HCT116 (cell line): ENCODE measurements at regions of chr16 and their contacts with region 1.

Region 1: DNA sequence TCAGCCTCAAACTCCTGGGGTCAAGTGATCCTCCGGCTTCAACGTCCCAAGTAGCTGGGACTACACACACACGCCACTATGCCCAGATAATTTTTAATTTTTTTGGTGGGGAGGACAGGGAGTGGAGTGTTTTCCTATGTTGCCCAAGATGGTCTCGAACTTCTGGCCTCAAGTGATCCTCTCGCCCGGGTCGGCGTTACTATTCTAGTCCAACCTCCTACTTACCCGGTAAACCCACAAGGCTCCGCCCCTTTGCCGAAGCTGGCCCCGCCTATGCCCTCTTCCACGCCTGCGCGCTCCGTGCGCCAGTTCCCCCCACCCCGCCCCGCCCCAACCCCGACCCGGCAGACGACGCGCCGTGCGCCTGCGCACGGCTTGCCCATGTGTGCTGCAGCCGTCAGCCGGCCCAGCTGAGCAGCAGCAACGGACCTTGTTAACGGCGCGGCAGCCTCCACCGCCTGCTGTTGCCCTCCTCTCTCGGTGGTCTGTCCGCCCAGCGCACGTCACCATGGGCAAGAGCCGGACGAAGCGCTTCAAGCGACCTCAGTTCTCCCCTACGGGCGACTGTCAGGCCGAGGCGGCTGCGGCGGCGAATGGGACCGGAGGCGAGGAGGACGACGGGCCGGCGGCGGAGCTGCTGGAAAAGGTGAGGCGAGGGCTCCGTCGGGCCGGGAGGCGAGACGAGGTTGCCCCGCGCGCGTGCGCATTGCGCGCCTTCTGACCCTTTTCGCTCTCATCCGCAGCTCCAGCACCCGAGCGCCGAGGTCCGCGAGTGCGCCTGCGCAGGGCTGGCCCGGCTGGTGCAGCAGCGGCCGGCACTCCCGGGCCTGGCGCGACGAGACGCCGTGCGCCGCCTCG is at the start of gene HEATR3:
- DNase-seq: peak; percentile 87
- ATAC-seq: peak; percentile 92
- H3K4me3 ChIP-seq: peak within 1 kb of the TSS; percentile 79 to 81
- H3K27ac ChIP-seq: peak within 1 kb of the TSS; percentile 84
- H3K4me1 ChIP-seq: peaks cover 0 to 14% of the 10 kb centered on the region in 2 experiments; a peak in 2 of 4 replicates
- H3K27me3 ChIP-seq: no peaks in the 10 kb centered on the region
- CTCF ChIP-seq: no peak
- POLR2A ChIP-seq: peak; percentile 70
- RAD21 ChIP-seq: no peak
- total RNA-seq, gene HEATR3: 16.3 TPM

Region 2: DNA sequence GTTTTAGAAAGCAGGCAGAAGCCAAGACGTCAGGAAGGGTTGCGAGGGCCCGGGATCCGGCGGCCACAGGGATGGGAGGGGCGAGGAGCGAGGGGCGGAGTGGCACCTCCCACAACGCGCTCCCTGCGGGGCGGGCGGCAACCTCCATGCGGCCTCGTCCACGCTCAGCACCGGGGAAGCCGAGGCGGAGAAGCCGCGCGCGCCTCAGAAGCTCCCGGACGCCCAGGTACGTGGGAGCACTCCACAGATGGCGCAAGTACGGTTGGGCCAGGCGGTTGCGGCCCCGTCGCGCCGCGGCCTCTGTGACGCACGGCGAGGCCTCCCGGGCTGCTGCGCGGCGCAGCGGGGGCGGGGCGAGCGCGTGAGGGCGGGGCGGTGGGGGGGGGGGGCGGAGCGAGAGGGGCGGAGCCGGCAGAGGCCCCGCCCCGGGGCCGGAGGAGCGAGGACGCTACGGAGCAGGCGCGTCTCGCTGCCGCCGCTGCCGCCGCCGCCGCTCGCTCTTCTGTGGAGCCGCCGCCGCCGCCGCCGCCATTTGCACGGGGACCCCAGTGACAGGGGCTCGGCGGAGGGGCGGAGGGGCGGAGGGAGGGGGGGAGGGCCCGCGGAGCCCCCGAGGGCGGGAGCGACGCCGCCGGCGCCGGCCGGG is 87.1 kb after region 1 on chr16 and contains the start of gene TENT4B:
- CTCF ChIA-PET with region 1: no interaction called
- POLR2A ChIA-PET with region 1: no interaction called
- RAD21 ChIA-PET with region 1: no interaction called
- intact Hi-C with region 1: loop called (anchors 2 kb)
- DNase-seq: peak; percentile 61
- ATAC-seq: peak; percentile 86
- H3K4me3 ChIP-seq: peak within 1 kb of the TSS; percentile 71 to 85
- H3K27ac ChIP-seq: peak within 1 kb of the TSS; percentile 77
- H3K4me1 ChIP-seq: peaks cover 15 to 25% of the 10 kb centered on the region in 2 experiments
- H3K27me3 ChIP-seq: no peaks in the 10 kb centered on the region
- CTCF ChIP-seq: no peak
- POLR2A ChIP-seq: peak; percentile 51
- RAD21 ChIP-seq: no peak
- total RNA-seq, gene TENT4B: 16.9 TPM